Prostate gland (tissue), 2 donors: ENCODE measurements at regions of chr15 and their contacts with region 1.

Region 1: DNA sequence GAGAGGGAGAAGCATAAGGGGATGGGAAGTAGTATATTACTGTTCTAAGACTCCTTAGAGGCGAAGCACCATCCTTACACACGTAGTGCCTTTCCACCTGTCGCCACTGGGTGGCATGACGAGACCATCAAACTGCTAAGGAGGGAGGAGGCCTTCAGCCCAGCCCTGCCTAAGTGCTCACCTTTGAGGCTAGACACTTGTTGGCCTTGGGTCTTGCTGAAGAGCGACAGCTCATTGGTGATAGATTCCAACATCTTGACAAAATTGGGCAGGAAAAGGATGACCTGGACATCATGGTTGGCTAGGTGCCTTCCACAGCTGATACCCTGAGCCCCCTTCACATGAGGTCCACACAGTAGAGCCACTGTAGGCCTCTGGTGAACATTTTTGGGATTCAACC is 19.6 kb downstream of the CLK3 start:
- DNase-seq: peak; percentile 62
- H3K4me3 ChIP-seq: no peak overlapping the region
- H3K27ac ChIP-seq: no peak overlapping the region
- H3K4me1 ChIP-seq: peaks cover 6% of the 10 kb centered on the region
- H3K27me3 ChIP-seq: no peaks in the 10 kb centered on the region
- CTCF ChIP-seq: peak; percentile 75 to 94 (median 92)
- POLR2A ChIP-seq: no peak

Region 2: GRCh38 chr15:74695597-74696397 is 60.6 kb after region 1 on chr15 and contains the start of gene EDC3:
- intact Hi-C with region 1: loop called (anchors 5 kb)
- DNase-seq: peak; percentile 86
- H3K4me3 ChIP-seq: peak within 1 kb of the TSS; percentile 79 to 80
- H3K27ac ChIP-seq: peak within 1 kb of the TSS; percentile 78 to 83
- H3K4me1 ChIP-seq: no peaks in the 10 kb centered on the region
- H3K27me3 ChIP-seq: no peaks in the 10 kb centered on the region
- CTCF ChIP-seq: no peak
- POLR2A ChIP-seq: peak; percentile 15
- total RNA-seq, gene EDC3: 20.6 to 36.8 TPM

Region 3: DNA sequence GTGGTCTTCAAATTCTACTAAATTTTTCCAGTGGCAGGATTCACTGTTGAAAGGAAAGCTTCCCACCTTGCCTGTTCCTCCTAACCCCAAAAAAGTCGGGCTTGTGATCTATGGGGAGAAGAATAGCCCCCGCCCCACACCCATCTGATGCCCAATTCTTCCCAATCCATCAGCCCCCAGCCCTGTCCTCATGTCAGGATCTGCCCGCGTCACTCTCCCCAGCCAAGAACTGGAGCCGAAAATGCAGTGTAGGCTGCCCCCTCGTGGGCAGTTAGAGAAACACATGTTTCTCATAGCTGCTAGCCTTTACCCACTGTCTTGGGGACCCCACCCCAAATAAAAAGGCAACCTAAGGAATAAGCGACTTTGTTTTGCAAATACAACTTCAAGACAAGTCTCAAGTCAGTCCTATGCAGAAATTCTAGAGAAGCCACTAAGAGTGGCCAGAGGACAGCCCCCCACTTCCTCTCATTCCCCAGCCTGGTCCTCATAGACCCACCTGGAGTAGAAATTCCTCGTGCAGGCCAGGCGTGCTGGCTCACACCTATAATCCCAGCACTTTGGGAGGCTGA is 133.6 kb after region 1 on chr15:
- intact Hi-C with region 1: loop called (anchors 2 kb)
- DNase-seq: peak; percentile 57
- H3K4me3 ChIP-seq: no peak overlapping the region
- H3K27ac ChIP-seq: no peak overlapping the region
- H3K4me1 ChIP-seq: no peaks in the 10 kb centered on the region
- H3K27me3 ChIP-seq: no peaks in the 10 kb centered on the region
- CTCF ChIP-seq: peak; percentile 75 to 90 (median 86)
- POLR2A ChIP-seq: no peak

Region 4: DNA sequence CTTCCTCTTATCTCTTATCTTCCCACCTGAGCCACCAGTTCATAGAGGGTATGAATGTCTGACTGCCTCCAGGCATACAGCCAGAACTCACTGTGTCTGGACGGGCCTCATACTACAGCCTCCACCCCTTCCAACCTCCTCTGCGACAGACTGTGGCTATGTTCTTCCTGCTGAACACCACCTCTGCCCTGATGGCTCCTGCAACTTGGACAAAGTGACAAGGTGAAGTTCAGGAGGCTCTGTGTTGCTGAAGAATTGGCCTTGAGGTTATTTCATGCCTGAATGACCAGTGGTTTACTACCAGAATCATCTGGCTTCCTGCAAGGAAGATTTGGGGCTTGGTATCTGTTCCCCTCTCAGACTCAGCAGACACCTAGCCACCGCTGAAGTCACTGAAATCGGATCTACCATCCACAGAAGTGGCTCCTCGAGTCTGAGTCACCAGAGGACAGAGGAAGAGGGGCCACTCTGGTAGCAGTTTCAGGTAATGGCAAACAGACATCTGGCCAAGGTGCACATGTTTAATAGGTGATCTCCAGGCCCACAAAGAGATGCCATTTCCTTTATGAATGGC is 221.9 kb after region 1 on chr15:
- intact Hi-C with region 1: no loop called
- DNase-seq: no peak
- H3K4me3 ChIP-seq: no peak overlapping the region
- H3K27ac ChIP-seq: no peak overlapping the region
- H3K4me1 ChIP-seq: peaks cover 8% of the 10 kb centered on the region
- H3K27me3 ChIP-seq: no peaks in the 10 kb centered on the region
- CTCF ChIP-seq: no peak
- POLR2A ChIP-seq: no peak

Region 5: DNA sequence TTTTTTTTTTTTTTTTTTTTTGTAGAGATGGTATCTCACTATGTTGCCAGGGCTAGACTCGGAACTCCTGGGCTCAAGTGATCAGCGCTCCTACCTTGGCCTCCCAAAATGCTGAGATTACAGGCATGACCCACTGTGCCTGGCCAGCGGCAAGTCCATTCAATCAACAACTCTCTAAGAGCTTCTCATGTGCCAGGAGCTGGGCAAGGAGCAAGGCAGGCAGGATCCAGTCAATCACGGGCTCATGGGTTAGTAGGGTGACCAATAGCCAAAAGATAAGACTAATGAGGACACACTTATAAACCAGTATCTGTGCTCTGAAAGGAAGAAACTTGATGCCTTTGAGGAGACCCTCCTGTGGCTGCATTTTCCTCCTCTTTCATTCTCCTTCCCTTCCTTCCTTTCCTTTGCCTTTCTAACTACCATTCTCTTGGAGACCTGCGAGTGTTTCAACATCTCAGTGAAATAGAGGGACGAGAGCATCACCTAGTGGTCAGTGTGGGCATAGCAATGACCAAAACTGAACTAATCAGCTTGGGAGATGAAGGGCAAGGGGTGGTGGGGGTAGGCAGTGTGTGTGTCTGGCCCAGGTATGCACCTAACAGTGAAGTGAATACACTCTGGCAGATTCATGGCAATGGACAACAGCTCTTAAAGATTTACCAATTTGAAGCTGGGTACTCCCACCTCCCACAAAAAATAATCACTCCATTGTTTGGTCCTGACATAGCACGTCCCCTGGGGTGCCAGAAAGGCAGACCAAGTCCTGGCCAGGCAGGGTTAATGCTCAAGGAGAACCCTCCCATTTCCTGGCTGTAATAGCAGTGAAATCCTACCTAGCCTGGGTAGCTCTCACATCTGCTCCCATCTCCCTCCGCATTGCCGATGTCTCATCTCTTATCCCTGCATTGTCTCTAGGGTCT is 315.1 kb after region 1 on chr15:
- intact Hi-C with region 1: loop called (anchors 5 kb)
- DNase-seq: peak; percentile 75
- H3K4me3 ChIP-seq: no peak overlapping the region
- H3K27ac ChIP-seq: no peak overlapping the region
- H3K4me1 ChIP-seq: no peaks in the 10 kb centered on the region
- H3K27me3 ChIP-seq: no peaks in the 10 kb centered on the region
- CTCF ChIP-seq: peak; percentile 93 to 98 (median 96)
- POLR2A ChIP-seq: no peak